GM10248 (cell line): ENCODE measurements at regions of chr2 and their contacts with region 1.

Region 1: DNA sequence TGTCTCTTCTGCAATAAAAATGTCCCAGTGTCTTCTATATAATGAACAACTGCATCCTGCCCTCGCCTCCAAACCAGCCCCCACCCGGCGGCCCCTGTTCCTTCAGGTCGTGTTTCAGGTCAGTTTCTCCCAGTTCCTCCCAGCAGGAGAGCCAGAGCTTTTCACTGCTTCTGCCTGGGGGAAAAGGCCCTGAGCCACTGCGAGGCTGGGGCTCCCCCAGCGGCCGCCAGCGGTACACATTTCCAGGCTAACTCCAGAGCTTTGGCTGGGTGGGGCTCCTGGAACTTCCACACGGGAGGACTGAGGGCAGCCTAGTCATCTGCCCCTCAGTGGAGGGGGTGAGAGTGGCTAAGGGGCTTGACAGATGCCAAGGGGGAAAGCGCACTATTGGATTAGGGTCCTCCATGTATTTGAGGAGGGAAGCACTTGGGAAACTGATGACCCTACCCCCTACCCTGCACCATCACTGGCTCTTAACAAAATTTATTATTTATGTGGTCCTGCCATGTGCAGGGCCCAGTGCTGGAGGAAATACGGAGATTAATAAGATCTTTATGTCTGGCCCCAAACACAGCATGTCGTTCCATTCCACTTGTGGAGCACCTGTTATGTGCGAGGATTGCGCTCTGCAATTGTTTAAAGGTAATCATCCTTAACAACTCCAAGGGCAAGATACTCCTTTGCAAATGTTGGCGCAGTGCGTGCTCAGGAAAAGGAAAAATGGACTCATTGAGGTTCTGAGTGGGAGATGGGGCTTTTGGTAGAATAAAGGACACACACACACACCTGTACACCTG is 17.3 kb upstream of the CYS1 start:
- DNase-seq: peak; percentile 76
- CTCF ChIP-seq: peak; percentile 92

Region 2: GRCh38 chr2:9782197-9782719 is 315.3 kb before region 1 on chr2:
- CTCF ChIA-PET with region 1: no interaction called
- POLR2A ChIA-PET with region 1: no interaction called
- DNase-seq: no peak
- CTCF ChIP-seq: no peak

Region 3: GRCh38 chr2:10079234-10079869 is 18.2 kb before region 1 on chr2:
- CTCF ChIA-PET with region 1: interaction called, 390 read pairs
- POLR2A ChIA-PET with region 1: no interaction called
- DNase-seq: peak; percentile 42
- CTCF ChIP-seq: no peak